Head of caudate nucleus (tissue), 42 donors: ENCODE measurements at regions of chr17 and their contacts with region 1.

Region 1: GRCh38 chr17:58112970-58113631 is 29.9 kb downstream of the DYNLL2 start:
- DNase-seq: peak; percentile 50 to 94 (median 86)

Region 2: DNA sequence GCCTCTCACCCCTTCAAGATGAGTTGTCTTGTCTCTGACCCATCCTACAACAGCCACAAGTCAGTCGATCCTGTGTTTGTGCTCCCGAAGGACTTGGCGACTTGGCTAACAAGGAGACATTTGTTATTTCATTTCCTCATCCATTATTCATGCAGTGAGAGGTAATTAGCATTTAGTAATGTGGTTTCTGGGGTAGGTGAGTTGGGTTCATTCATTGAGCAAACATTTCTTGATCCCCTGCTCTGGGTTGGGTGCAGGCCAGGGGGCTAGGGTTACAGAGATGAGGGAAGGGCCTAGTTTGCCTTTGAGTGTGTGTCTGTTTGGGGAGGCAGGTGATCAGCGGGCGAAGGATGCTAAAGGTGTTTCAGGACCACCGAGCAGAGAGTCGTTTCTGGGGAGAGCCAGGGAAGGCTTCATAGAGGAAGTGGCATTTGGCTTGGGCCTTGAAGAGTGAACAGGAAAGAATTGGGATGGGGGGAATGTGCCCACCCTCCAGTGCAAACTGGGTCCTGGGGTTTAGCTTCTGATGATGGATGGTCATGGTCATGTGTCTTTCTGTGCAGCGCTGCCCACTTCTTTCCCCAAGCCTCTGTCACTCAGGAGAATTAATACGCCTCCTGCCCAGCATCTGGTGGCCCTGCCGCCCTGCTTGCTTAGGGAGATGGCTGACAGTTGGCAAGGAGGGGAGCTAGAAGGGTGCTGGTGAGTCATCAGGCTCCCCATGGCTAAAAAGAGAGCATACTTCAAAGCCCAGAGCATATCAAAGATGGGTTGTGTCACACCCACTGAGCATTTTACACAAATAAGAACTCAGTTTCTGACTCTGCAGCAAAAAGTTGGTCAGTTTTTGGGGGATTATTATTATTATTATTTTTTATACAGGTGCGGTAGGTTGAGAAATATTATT is 818.2 kb before region 1 on chr17:
- intact Hi-C with region 1: no loop called
- DNase-seq: peak in 1 of 42 donors; percentile 61

Region 3: DNA sequence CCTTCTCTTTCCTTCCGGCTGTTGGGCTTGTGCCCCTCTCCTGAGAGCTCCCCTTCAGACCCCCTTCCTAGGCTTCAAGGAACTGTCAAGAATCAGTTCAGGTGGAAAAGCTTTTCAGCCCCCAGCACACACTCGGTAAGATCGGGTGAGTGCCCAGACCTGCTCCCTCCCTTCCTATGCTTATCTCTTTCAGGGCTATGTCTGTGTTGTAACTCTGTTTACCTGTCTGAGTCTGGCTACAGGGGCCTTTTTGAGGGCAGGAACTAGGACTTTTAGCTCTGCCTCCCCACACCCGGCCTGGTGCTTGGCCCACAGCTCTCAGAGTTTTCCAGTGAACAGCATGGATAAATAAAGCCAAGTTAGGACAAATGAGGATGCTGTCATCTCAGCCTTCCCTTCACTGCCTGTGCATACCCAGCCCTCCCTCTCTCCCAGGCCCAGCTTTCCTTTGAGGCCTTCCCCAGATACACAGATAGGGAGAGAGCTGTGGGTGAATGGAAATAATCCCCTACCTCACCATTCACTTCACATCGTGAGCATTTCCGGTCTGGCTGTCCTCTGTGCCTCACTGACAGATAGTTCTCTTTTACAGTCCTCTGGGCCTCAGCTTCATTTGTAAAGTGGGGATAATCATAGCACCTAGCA is 257.6 kb before region 1 on chr17:
- intact Hi-C with region 1: loop called (anchors 5 kb)
- DNase-seq: no peak

Region 4: GRCh38 chr17:58156839-58157803 is 44.0 kb after region 1 on chr17:
- intact Hi-C with region 1: no loop called
- DNase-seq: peak; percentile 14 to 84 (median 61)

Region 5: GRCh38 chr17:58289869-58290268 is 176.8 kb after region 1 on chr17:
- intact Hi-C with region 1: no loop called
- DNase-seq: peak in 5 of 42 donors; percentile 3 to 29 (median 18)